ENCODE measurements at regions of chr9 and their contacts with region 1.

Region 1: DNA sequence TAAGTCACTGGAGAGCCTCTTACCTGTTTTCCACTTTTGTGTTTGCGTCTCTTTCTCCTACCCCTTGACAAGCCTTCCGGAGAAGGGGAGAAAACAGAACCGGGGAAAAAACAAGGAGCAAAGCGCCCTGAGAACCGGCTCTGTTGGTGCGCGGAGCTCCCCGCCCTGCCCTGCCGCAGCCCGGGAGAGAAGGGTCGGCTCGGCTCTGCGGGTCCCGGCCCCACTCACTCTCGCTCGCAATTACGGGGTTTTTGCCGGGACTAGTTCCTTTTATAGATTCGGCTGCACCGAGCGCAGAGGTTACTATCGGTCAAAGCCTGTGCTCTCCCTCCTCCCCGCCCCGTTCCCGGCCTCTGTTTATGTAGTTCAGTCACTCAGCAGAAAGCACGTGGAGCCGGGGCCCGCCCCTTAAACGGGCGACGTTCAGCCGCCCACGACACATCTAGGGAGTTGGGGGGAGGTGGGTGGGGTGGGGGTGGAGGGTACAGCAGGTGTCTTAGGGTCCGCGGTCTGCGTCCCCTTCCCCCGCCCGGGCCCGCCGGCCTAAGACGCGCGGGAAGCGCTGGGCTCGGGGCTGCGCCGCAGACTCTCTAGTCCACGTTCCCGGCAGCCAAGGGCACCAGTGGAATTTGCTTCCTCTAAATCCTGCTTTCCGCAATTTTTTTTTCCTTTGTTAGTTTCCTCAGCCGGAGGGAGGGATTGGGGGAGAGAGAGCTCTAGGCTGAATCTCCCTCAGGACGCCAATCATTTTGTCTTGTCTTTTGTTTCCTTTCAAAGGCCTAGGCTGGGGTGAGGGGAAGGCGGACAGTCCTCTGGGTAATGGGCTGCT is at the start of gene ABCA1:
- DNase-seq: peak; percentile 89 to 96 (median 93)
- ATAC-seq: peak; percentile 79 to 90 (median 87)
- H3K4me3 ChIP-seq: peak within 1 kb of the TSS; percentile 61 to 90 (median 74)
- H3K27ac ChIP-seq: peak within 1 kb of the TSS; percentile 71 to 95 (median 86)
- H3K4me1 ChIP-seq: peaks cover 0 to 38% (median 9%) of the 10 kb centered on the region in 12 donors
- H3K27me3 ChIP-seq: no peaks in the 10 kb centered on the region
- CTCF ChIP-seq: no peak
- POLR2A ChIP-seq: peak in 1 of 2 donors; percentile 77
- total RNA-seq, gene ABCA1: 5.2 to 45.3 (median 12.0) TPM

Region 2: DNA sequence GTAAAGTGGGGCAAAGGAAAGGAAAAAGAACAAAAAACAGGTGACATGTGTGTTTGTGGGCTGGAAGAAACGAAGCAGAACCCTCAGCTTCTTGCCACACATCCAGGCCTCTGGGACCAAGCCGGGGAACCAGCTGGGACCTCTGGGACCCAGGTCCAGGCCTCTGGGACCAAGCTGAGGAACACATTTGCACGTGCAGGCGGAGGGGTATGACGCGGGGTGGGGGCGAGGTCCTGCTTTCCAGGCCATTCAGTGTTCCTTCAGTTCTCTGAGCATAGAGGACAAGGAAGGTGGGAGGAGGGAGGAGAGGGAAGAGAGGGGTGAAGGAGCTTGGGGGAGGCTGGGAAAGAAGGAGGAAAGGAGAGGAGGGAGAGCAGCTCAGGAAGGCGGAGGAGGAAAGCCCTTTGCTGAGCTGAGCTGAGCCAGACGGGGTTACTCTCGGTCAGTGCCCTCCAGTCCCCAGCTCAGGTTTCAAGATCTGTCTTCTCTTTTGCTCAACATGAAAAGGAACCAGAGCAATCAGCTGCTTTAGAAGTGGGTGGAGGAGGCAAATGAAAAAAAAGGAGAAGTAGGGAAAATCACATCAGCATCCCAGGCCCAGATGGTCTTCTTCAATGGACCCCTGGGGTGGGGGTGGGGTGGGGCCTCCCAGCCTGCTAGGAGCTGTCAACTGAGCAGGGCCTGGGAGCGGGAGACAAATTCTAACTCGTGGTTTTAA is 59.3 kb before region 1 on chr9:
- intact Hi-C with region 1: loop called in 8 of 10 experiments (anchors 5 to 10 kb)
- DNase-seq: peak; percentile 67 to 79 (median 72)
- ATAC-seq: peak; percentile 89 to 93 (median 92)
- H3K4me3 ChIP-seq: no peak overlapping the region
- H3K27ac ChIP-seq: peak overlapping the region in 11 of 12 donors; percentile 36 to 81 (median 64)
- H3K4me1 ChIP-seq: peaks cover 8 to 70% (median 47%) of the 10 kb centered on the region in 12 donors
- H3K27me3 ChIP-seq: no peaks in the 10 kb centered on the region
- CTCF ChIP-seq: no peak
- POLR2A ChIP-seq: no peak

Region 3: DNA sequence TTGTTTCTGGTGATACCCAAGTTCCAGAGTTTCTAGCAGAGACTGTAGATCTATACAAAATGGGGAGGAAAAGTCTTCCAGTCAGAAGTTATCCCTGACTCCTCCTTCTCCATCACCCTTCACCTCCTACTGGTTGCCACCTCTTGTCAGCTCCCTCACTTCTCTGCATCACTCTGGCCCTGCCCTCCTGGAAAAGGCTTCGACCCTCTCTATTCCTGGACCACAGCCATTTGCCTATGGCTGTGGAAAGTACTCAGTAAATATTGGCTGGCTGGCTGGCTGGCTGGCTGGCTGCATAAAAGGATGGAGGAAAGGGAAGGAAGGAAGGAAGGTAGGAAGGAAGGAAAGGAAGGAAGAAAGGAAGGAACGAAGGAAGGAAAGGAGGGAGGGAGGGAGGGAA is 32.5 kb after region 1 on chr9:
- intact Hi-C with region 1: no loop called
- DNase-seq: no peak
- ATAC-seq: no peak
- H3K4me3 ChIP-seq: no peak overlapping the region
- H3K27ac ChIP-seq: no peak overlapping the region
- H3K4me1 ChIP-seq: peaks cover 0 to 12% (median 0%) of the 10 kb centered on the region in 12 donors
- H3K27me3 ChIP-seq: no peaks in the 10 kb centered on the region
- CTCF ChIP-seq: no peak
- POLR2A ChIP-seq: no peak

Region 4: DNA sequence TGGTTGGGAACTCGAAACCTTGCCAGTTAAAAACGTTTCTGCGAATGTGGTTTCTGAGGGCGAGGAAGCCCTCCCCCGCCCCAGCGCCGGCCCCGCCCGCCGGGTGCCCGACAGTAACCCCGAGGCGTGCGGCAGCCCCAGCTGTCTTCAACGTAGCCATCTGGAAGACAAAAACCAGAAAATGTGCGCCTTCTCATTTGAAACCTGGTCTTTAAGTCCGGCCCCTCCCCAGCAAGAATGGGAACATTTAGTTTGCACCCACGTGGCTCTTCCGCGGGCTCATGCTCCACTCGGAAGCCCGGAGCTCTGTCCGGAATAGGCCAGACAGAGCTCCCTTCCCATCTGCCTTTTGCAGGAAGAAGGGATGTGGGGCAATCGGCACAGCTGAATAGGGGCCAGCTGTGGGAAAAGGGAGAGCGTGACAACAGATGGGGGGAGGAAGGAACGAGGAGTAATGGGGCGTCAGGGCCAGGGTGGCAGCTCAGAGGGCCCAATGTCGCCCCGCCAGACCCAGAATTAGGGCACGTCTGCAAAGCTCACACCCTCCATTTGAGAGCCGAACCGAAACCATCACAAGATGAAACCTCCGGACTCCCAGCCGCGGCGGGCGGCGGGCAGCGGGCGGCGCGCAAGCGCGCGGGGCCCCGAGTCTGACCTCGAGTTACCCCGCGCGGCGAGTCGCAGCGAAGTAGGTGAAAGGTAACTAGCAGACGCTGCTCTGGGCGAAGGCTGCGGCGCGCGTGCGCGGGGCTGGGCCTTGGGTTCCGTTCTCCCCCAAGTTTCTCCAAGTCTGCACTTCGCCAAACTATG is 63.2 kb after region 1 on chr9:
- intact Hi-C with region 1: loop called in 4 of 10 experiments (anchors 1 to 5 kb)
- DNase-seq: peak; percentile 88 to 96 (median 95)
- ATAC-seq: peak; percentile 75 to 91 (median 86)
- H3K4me3 ChIP-seq: peak overlapping the region; percentile 33 to 86 (median 68)
- H3K27ac ChIP-seq: peak overlapping the region; percentile 88 to 97 (median 95)
- H3K4me1 ChIP-seq: peaks cover 3 to 51% (median 36%) of the 10 kb centered on the region in 12 donors
- H3K27me3 ChIP-seq: no peaks in the 10 kb centered on the region
- CTCF ChIP-seq: no peak
- POLR2A ChIP-seq: peak in 1 of 2 donors; percentile 62

Region 5: GRCh38 chr9:105064315-105065097 is 136.4 kb after region 1 on chr9:
- intact Hi-C with region 1: loop called in 3 of 10 experiments (anchors 5 to 10 kb)
- DNase-seq: peak; percentile 87 to 96 (median 93)
- ATAC-seq: peak; percentile 97 to 98 (median 98)
- H3K4me3 ChIP-seq: peak overlapping the region in 3 of 12 donors; percentile 8 to 29 (median 9)
- H3K27ac ChIP-seq: peak overlapping the region in 11 of 12 donors; percentile 55 to 92 (median 72)
- H3K4me1 ChIP-seq: peaks cover 7 to 38% (median 20%) of the 10 kb centered on the region in 12 donors
- H3K27me3 ChIP-seq: no peaks in the 10 kb centered on the region
- CTCF ChIP-seq: peak in 1 of 12 donors; percentile 10
- POLR2A ChIP-seq: peak in 1 of 2 donors; percentile 18

Region 6: DNA sequence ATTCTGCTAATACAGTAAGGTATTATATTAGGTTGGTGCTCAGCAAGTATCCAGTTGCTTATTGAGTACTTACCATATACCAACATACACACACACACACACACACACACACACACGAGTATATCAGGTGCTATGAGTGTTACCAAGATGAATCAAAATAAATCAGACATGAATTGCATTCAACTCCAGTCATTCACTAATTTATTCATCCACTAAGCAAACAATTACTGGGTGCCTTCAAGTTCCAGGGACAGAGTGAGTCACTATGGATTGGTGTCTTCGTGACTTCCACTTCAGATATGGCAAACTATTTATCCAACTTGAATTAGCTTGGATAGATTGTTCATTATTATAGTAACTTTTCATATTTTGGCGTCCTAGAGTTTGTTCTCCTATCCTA is 175.7 kb after region 1 on chr9:
- intact Hi-C with region 1: no loop called
- DNase-seq: no peak
- ATAC-seq: no peak
- H3K4me3 ChIP-seq: no peak overlapping the region
- H3K27ac ChIP-seq: no peak overlapping the region
- H3K4me1 ChIP-seq: no peaks in the 10 kb centered on the region
- H3K27me3 ChIP-seq: no peaks in the 10 kb centered on the region
- CTCF ChIP-seq: no peak
- POLR2A ChIP-seq: no peak

Region 7: GRCh38 chr9:105414947-105415661 is 487.0 kb after region 1 on chr9:
- intact Hi-C with region 1: loop called in 6 of 10 experiments (anchors 5 to 10 kb)
- DNase-seq: peak in 3 of 5 donors; percentile 42 to 60 (median 49)
- ATAC-seq: peak; percentile 45 to 82 (median 69)
- H3K4me3 ChIP-seq: no peak overlapping the region
- H3K27ac ChIP-seq: no peak overlapping the region
- H3K4me1 ChIP-seq: peaks cover 0 to 5% (median 0%) of the 10 kb centered on the region in 12 donors
- H3K27me3 ChIP-seq: no peaks in the 10 kb centered on the region
- CTCF ChIP-seq: peak; percentile 77 to 94 (median 86)
- POLR2A ChIP-seq: no peak